ENCODE measurements at regions of chr1 and their contacts with region 1.

Region 1: GRCh38 chr1:59879574-59879973 is 47.0 kb downstream of the CYP2J2 start:
- DNase-seq: no peak

Region 2: GRCh38 chr1:59948990-59949389 is 69.4 kb after region 1 on chr1:
- intact Hi-C with region 1: loop called (anchors 1 kb)
- DNase-seq: no peak

Measured in cardiac septum (tissue), 1 donor.